ENCODE measurements at regions of chr20 and their contacts with region 1.

Region 1: DNA sequence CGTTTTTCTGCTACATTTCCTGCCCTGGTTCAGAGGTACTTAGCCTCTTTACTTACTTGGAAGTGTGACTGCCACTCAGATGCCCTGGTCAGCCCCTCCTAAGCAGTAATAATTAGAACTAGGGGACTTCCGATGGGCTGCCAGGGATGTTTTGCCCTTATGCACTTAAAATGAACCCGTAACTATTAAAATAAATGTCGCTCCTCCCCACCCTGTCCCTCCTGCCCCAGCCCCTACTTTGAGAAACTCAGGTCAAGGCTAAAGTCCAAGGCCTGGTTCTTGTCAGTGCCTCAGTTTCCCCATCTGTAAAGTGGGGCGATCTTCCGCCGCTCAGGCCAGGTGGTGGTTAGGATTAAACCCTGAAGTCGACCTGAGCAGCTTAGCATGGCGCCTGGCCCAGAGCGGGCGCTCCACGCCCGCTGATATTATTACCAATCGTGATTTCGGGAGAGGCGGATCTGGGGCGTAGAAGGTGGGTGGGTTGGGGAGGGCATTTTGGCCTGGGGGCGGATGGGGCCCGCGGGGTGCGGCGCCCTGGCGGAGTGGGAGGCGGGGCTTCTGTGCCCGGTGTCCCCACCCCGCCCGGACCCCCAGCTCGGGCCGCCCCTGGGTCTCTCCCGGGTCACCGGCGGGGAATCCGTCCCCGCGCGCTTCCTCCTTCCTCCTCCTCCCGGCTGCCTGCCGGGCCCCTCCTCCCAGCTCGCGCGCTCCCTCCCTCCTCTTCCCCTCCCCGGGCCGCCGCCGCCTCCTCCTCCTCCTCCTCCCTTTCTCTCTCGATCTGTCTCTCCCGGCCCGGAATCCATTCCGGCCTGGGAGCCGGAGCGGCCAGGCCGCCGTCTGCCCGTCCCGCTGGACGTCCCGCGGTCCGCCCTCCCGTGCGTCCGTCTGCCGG is at the start of gene SRC:
- DNase-seq: peak; percentile 69 to 80
- H3K4me3 ChIP-seq: peak within 1 kb of the TSS; percentile 64 to 93 (median 73)
- H3K27ac ChIP-seq: peak within 1 kb of the TSS; percentile 90 to 97
- H3K4me1 ChIP-seq: peaks cover 0 to 7% of the 10 kb centered on the region in 2 donors
- H3K27me3 ChIP-seq: no peaks in the 10 kb centered on the region
- CTCF ChIP-seq: no peak
- POLR2A ChIP-seq: no peak
- total RNA-seq, gene SRC: 12.8 to 25.6 (median 20.6) TPM

Region 2: GRCh38 chr20:36116807-36117441 is 1228.7 kb before region 1 on chr20:
- intact Hi-C with region 1: no loop called
- DNase-seq: no peak
- H3K4me3 ChIP-seq: no peak overlapping the region
- H3K27ac ChIP-seq: peak overlapping the region in 1 of 2 donors; percentile 45
- H3K4me1 ChIP-seq: peaks cover 0 to 17% of the 10 kb centered on the region in 2 donors
- H3K27me3 ChIP-seq: no peaks in the 10 kb centered on the region
- CTCF ChIP-seq: no peak
- POLR2A ChIP-seq: no peak

Region 3: GRCh38 chr20:36951198-36951976 is 394.2 kb before region 1 on chr20 and contains the start of gene SAMHD1:
- intact Hi-C with region 1: loop called (anchors 5 kb)
- DNase-seq: peak; percentile 82 to 84
- H3K4me3 ChIP-seq: peak within 1 kb of the TSS; percentile 87 to 98 (median 97)
- H3K27ac ChIP-seq: peak within 1 kb of the TSS; percentile 89 to 90
- H3K4me1 ChIP-seq: no peaks in the 10 kb centered on the region
- H3K27me3 ChIP-seq: no peaks in the 10 kb centered on the region
- CTCF ChIP-seq: peak in 1 of 3 donors; percentile 16
- POLR2A ChIP-seq: peak; percentile 45
- total RNA-seq, gene SAMHD1: 146 to 380 (median 311) TPM

Region 4: DNA sequence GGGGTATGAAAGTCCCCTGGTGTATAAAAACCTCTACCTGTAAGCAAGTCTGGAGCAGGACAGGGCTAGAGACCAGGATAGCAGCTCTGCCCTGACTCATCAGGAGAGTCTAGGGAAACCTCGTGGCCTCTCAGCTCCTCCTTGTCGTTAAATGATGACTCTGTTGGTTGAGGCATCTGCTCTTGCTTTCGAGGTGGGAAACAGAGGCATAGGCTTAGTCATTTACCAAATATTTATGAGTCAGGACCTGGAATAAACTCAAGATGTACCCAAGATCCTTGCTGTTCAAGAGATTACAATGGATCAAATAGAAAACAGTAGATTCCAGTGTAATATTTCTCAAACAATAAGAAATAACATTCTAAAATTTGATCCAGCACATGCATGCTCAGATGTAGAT is 50.6 kb before region 1 on chr20:
- intact Hi-C with region 1: loop called (anchors 10 kb)
- DNase-seq: no peak
- H3K4me3 ChIP-seq: no peak overlapping the region
- H3K27ac ChIP-seq: peak overlapping the region; percentile 62 to 81
- H3K4me1 ChIP-seq: peaks cover 0 to 23% of the 10 kb centered on the region in 2 donors
- H3K27me3 ChIP-seq: no peaks in the 10 kb centered on the region
- CTCF ChIP-seq: no peak
- POLR2A ChIP-seq: no peak